Activated CD8-positive, alpha-beta T cell treated with anti-CD3 and anti-CD28 coated beads for 36 hours (primary cell): ENCODE measurements at regions of chrX and their contacts with region 1.

Region 1: GRCh38 chrX:154918060-154918483 is 31.9 kb downstream of the F8A1 start:
- DNase-seq: peak; percentile 25
- ATAC-seq: peak; percentile 67
- H3K4me3 Mint-ChIP-seq: peak overlapping the region; percentile 50
- H3K27ac Mint-ChIP-seq: no peak overlapping the region
- H3K4me1 Mint-ChIP-seq: peaks cover 2% of the 10 kb centered on the region
- H3K27me3 Mint-ChIP-seq: peaks cover 2% of the 10 kb centered on the region
- CTCF ChIP-seq: peak; percentile 70

Region 2: GRCh38 chrX:154734061-154734781 is 183.9 kb before region 1 on chrX:
- CTCF ChIA-PET with region 1: no interaction called
- POLR2A ChIA-PET with region 1: no interaction called
- intact Hi-C with region 1: no loop called
- DNase-seq: peak; percentile 45
- ATAC-seq: peak; percentile 58
- H3K4me3 Mint-ChIP-seq: peak overlapping the region; percentile 64
- H3K27ac Mint-ChIP-seq: peak overlapping the region; percentile 96
- H3K4me1 Mint-ChIP-seq: peaks cover 98% of the 10 kb centered on the region
- H3K27me3 Mint-ChIP-seq: no peaks in the 10 kb centered on the region
- CTCF ChIP-seq: no peak

Region 3: GRCh38 chrX:154793084-154793795 is 124.8 kb before region 1 on chrX:
- CTCF ChIA-PET with region 1: no interaction called
- POLR2A ChIA-PET with region 1: no interaction called
- intact Hi-C with region 1: no loop called
- DNase-seq: no peak
- ATAC-seq: no peak
- H3K4me3 Mint-ChIP-seq: no peak overlapping the region
- H3K27ac Mint-ChIP-seq: no peak overlapping the region
- H3K4me1 Mint-ChIP-seq: peaks cover 13% of the 10 kb centered on the region
- H3K27me3 Mint-ChIP-seq: no peaks in the 10 kb centered on the region
- CTCF ChIP-seq: no peak

Region 4: DNA sequence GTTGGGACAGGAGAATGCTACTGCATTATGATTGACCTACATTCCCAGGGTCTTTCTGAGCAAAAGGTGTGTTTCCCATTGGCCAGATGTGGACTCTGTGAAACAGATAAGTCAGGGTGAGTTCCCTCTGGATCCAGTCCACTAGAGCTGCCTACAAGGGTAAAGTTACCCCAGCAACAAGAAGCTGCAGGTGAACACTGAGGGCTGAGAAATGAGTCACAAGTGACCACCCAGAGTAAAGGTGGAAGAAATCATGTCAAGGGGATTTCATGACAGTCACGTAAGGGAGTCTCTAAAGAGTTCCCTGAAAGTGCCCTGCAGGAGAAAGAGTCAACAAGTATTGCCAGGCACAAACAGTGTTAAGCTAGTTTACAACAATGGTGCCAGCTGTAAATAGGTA is 15.7 kb before region 1 on chrX:
- CTCF ChIA-PET with region 1: interaction called, 13 read pairs
- POLR2A ChIA-PET with region 1: no interaction called
- intact Hi-C with region 1: no loop called
- DNase-seq: no peak
- ATAC-seq: no peak
- H3K4me3 Mint-ChIP-seq: no peak overlapping the region
- H3K27ac Mint-ChIP-seq: no peak overlapping the region
- H3K4me1 Mint-ChIP-seq: no peaks in the 10 kb centered on the region
- H3K27me3 Mint-ChIP-seq: peaks cover 2% of the 10 kb centered on the region
- CTCF ChIP-seq: no peak

Region 5: DNA sequence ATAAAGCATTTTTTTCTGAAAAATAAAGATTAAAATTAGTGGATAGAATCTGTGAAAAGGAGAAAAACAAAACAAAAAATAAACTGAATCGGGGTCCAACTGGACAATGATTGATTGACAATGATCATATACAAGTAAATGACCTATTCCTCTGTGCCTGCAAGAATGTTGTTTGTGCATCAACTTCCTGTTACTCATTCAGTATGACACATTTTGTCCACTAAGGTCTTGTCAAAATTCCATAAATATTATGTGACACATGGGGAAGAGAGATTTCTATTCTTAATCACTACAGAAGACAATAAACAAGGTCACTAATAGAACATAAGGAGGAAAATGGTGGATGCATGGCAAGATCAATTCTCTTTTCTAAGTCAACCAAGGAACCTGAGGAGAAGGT is 49.5 kb after region 1 on chrX:
- CTCF ChIA-PET with region 1: interaction called, 10 read pairs
- POLR2A ChIA-PET with region 1: no interaction called
- intact Hi-C with region 1: no loop called
- DNase-seq: no peak
- ATAC-seq: no peak
- H3K4me3 Mint-ChIP-seq: no peak overlapping the region
- H3K27ac Mint-ChIP-seq: no peak overlapping the region
- H3K4me1 Mint-ChIP-seq: no peaks in the 10 kb centered on the region
- H3K27me3 Mint-ChIP-seq: no peaks in the 10 kb centered on the region
- CTCF ChIP-seq: no peak

Region 6: DNA sequence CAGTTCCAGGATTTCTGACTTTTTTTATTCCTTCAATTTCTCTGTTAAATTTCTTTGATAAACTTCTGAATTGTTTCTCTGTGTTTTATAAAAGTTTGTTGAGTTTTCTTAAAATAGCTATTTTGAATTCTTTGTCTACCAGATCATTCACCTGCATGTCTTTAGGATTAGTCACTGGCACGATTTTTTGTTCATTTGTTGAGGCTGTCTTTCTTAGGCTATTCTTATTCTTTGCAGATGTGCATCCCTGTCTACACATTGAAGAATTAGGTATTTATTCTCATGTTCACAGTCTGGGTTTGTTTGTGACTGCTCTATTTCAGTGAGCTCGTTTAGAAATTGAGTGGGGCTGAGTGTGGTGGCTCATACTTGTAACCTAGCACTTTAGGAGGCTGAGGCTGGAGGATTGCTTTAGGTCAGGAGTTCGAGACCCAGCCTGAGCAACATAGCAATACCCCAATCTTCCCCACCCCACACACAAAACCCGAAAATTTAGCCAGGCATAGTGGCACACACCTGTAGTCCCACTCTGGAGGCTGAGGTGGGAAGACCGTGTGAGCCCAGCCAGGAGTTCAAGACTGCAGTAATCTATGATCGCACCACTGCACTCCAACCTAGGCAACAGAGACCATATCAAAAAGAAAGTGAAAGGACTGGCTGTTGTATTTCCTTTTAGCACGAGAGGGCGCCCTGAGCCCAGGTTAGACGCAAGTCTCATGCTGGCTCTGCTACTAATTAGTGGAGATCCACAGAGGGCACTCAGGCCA is 62.4 kb after region 1 on chrX:
- CTCF ChIA-PET with region 1: interaction called, 11 read pairs
- POLR2A ChIA-PET with region 1: no interaction called
- intact Hi-C with region 1: no loop called
- DNase-seq: peak; percentile 87
- ATAC-seq: peak; percentile 99
- H3K4me3 Mint-ChIP-seq: peak overlapping the region; percentile 73
- H3K27ac Mint-ChIP-seq: peak overlapping the region; percentile 76
- H3K4me1 Mint-ChIP-seq: peaks cover 5% of the 10 kb centered on the region
- H3K27me3 Mint-ChIP-seq: no peaks in the 10 kb centered on the region
- CTCF ChIP-seq: peak; percentile 47

Region 7: DNA sequence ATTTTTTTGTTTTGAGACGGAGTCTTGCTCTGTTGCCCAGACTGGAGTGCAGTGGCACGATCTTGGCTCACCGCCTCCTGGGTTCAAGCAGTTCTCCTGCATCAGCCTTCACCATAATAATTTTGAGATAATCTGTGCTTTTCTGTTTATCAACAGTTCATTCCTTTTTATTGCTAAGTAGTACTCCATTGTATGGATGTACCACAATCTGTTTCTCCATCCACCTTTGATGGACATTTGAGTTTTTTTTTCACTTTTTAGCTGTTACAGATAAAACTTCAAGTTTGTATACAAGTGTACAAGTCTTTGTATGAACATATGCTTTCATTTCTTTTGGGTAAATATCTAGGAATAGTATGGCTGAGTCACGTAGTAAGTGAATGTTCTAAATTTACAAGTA is 117.6 kb after region 1 on chrX:
- CTCF ChIA-PET with region 1: no interaction called
- POLR2A ChIA-PET with region 1: no interaction called
- intact Hi-C with region 1: no loop called
- DNase-seq: no peak
- ATAC-seq: no peak
- H3K4me3 Mint-ChIP-seq: no peak overlapping the region
- H3K27ac Mint-ChIP-seq: no peak overlapping the region
- H3K4me1 Mint-ChIP-seq: peaks cover 19% of the 10 kb centered on the region
- H3K27me3 Mint-ChIP-seq: no peaks in the 10 kb centered on the region
- CTCF ChIP-seq: no peak